ENCODE measurements at regions of chr5 and their contacts with region 1.

Region 1: DNA sequence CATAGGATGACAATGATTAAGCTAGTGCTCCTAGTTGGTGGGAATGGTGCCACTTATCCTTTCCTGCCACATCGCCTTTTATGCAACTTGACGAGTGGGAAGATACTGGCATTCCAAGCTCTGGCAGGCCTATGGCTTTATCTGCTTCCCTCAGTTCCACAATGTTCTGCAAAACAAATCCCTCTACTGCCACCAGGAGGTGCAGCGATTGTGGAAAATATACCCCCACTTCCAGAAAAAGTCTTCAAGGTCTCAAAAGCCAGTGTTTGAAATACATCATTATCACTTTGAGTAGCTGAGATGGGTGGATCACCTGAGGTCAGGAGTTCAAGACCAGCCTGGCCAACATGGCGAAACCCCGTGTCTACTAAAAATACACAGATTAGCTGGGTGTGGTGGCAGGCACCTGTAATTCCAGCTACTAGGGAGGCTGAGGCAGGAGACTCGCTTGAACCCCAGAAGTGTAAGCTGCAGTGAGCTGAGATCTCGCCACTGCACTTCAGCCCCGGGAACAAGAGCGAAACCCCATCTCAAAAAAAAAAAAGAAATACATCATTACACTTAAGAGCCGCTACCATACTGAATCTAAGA is 3.4 kb downstream of the CLINT1 start:
- DNase-seq: peak; percentile 63
- H3K4me3 Mint-ChIP-seq: peak overlapping the region; percentile 76
- H3K27ac Mint-ChIP-seq: peak overlapping the region; percentile 31
- H3K4me1 Mint-ChIP-seq: peaks cover 42% of the 10 kb centered on the region
- H3K27me3 Mint-ChIP-seq: no peaks in the 10 kb centered on the region
- CTCF ChIP-seq: peak; percentile 60

Region 2: GRCh38 chr5:157888814-157889532 is 33.5 kb after region 1 on chr5:
- CTCF ChIA-PET with region 1: interaction called, 5 read pairs
- intact Hi-C with region 1: loop called (anchors 1 kb)
- DNase-seq: peak; percentile 39
- H3K4me3 Mint-ChIP-seq: peak overlapping the region; percentile 47
- H3K27ac Mint-ChIP-seq: peak overlapping the region; percentile 79
- H3K4me1 Mint-ChIP-seq: peaks cover 49% of the 10 kb centered on the region
- H3K27me3 Mint-ChIP-seq: no peaks in the 10 kb centered on the region
- CTCF ChIP-seq: no peak

Region 3: DNA sequence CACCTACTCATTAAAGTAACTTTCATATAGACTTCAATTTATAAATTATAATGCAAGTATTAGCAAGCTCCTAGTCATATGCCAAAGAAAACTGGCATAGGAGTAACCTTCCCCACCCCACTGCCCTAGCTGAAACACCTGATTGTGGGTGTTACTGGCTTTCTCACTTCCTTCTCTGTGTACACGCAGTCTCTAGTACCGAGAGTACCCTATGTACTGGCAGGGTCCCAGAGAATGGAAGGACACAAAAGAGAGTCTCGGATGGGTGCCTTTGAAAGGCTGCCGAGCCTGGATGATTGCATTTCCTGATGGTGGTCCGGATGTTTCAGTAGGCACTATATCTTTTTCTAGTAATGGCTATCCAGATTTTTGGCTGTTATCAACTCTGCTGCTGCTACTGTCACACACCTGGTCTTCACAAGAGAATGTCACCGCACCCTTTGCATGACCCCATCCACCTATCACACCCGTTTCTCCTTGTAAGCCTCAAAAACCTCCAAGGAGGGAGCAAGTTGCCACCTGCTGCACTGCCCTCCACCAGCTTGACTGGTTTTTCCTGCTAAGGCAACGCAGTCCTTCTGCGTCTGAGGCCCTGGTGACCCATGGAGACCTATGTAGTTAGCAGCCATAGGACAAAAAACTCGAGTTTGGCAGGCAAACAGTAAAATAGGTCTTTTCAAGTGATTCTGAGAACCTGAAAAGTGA is 57.3 kb after region 1 on chr5:
- CTCF ChIA-PET with region 1: interaction called, 8 read pairs
- intact Hi-C with region 1: loop called (anchors 1 kb)
- DNase-seq: peak; percentile 83
- H3K4me3 Mint-ChIP-seq: no peak overlapping the region
- H3K27ac Mint-ChIP-seq: peak overlapping the region; percentile 88
- H3K4me1 Mint-ChIP-seq: peaks cover 56% of the 10 kb centered on the region
- H3K27me3 Mint-ChIP-seq: no peaks in the 10 kb centered on the region
- CTCF ChIP-seq: no peak

Region 4: GRCh38 chr5:157917899-157918809 is 62.7 kb after region 1 on chr5:
- CTCF ChIA-PET with region 1: interaction called, 8 read pairs
- intact Hi-C with region 1: loop called (anchors 1 kb)
- DNase-seq: peak; percentile 86
- H3K4me3 Mint-ChIP-seq: peak overlapping the region; percentile 60
- H3K27ac Mint-ChIP-seq: peak overlapping the region; percentile 92
- H3K4me1 Mint-ChIP-seq: peaks cover 70% of the 10 kb centered on the region
- H3K27me3 Mint-ChIP-seq: no peaks in the 10 kb centered on the region
- CTCF ChIP-seq: peak; percentile 61

Region 5: GRCh38 chr5:157994906-157995519 is 139.5 kb after region 1 on chr5:
- CTCF ChIA-PET with region 1: interaction called, 16 read pairs
- intact Hi-C with region 1: loop called (anchors 1 kb)
- DNase-seq: peak; percentile 86
- H3K4me3 Mint-ChIP-seq: peak overlapping the region; percentile 47
- H3K27ac Mint-ChIP-seq: peak overlapping the region; percentile 7
- H3K4me1 Mint-ChIP-seq: peaks cover 21% of the 10 kb centered on the region
- H3K27me3 Mint-ChIP-seq: no peaks in the 10 kb centered on the region
- CTCF ChIP-seq: peak; percentile 70

Region 6: GRCh38 chr5:158027806-158028775 is 172.6 kb after region 1 on chr5:
- CTCF ChIA-PET with region 1: no interaction called
- intact Hi-C with region 1: no loop called
- DNase-seq: no peak
- H3K4me3 Mint-ChIP-seq: no peak overlapping the region
- H3K27ac Mint-ChIP-seq: no peak overlapping the region
- H3K4me1 Mint-ChIP-seq: no peaks in the 10 kb centered on the region
- H3K27me3 Mint-ChIP-seq: peaks cover 54% of the 10 kb centered on the region
- CTCF ChIP-seq: no peak